WTC11 (cell line): ENCODE measurements at regions of chr9 and their contacts with region 1.

Region 1: DNA sequence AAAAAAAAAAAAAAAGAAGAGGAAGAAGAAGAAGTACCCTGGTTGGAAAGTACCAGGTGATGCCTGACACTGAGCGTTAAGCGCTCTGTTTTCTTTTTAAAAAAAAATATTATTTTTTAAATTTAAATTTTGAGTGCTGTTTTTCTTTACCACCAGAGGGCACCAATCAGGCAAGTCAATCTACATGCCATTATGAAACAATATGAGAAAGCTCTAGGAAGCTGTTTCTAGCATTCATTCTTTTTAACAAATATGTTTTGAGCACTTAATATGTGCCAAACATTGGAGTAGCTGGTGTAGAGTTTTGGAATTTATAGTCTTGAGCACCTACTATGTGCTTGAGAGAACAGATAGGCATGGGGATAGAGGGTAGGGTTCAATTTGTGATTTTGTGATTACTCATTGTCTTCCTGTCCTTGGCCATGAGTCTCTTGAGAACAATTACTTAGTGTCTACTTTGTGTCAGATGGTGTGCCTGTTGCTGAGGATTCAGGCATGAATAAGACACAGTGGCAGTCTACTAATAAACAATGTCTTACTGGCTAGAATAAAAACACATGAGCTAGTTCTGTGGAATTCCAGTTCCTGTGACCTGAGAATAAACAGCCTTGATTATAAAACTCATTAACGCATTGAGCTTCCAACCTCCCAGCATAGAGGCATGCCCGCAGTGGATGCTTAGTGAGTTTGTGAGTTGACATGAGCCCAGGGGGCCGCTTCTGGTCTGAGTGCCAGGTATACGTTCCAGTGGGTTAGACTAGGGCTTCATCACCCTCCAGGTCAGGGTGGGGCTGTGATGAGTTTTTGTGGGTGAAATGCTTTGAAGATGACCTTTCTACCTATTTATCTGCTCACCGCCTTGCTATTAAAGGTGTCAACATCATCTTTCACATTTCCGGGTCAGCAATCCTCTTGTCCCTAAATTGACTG is 3.0 kb upstream of the UBE2R2 start:
- DNase-seq: no peak
- ATAC-seq: no peak
- H3K4me3 Mint-ChIP-seq: no peak overlapping the region
- H3K27ac Mint-ChIP-seq: no peak overlapping the region
- H3K4me1 Mint-ChIP-seq: peaks cover 17% of the 10 kb centered on the region
- H3K27me3 Mint-ChIP-seq: no peaks in the 10 kb centered on the region
- CTCF ChIP-seq: peak; percentile 38

Region 2: DNA sequence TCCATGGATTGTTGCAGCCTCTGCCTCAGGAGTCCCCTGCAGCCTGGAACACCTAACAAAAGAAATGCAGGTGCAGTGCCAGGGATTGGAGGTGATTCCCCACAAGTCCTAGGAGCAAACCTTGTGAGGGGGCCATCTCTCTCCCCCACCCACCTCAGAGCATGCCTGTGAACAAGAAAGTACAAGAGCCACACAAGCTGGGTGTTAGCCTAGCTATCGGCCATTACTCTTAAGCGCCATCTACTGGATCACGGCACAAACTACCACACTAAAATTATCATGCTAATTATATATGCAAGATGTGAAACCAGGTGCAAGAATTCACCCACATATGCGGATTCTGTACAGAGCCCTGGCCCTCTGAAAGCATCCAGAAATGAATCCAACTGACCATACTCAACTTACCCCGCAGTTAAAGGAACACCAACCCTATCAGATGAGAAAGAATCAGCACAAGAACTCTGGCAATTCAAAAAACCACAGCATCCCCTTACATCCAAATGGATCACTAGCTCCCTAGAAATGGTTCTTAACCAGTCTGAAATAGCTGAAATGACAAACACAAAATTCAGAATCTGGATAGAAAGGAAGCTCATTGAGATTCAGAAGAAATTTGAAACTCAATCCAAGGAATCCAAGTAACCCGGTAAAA is 35.2 kb before region 1 on chr9:
- CTCF ChIA-PET with region 1: interaction called, 24 read pairs
- POLR2A ChIA-PET with region 1: no interaction called
- DNase-seq: peak; percentile 55
- ATAC-seq: peak; percentile 98
- H3K4me3 Mint-ChIP-seq: no peak overlapping the region
- H3K27ac Mint-ChIP-seq: no peak overlapping the region
- H3K4me1 Mint-ChIP-seq: no peaks in the 10 kb centered on the region
- H3K27me3 Mint-ChIP-seq: peaks cover 3% of the 10 kb centered on the region
- CTCF ChIP-seq: peak; percentile 44

Region 3: DNA sequence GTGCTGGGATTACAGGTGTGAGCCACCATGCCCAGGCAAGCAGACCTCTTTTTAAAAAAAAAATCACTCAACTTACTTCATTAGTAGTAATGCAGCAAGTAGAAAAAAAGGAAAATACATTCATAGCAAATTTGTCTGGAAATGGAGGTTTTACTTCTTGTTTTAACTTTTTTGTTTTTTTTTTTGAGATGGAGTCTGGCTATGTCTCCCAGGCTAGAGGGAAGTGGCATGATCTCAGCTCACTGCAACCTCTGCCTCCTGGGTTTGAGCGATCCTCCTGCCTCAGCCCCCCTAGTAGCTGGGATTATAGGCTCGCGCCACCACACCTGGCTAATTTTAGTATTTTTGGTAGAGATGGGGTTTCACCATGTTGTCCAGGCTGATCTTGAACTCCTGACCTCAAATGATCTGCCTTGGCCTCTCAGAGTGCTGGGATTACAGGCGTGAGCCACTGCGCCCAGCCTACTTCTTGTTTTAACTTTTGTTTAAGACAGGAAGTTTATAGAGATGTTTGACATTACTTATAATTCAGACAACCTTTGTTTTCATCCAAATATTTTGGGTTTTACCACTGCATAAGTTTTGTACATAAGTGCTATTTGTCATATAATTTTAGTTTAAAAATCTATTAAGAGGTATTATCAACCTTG is 29.5 kb after region 1 on chr9:
- CTCF ChIA-PET with region 1: interaction called, 6 read pairs
- POLR2A ChIA-PET with region 1: interaction called, 10 read pairs
- DNase-seq: no peak
- ATAC-seq: no peak
- H3K4me3 Mint-ChIP-seq: no peak overlapping the region
- H3K27ac Mint-ChIP-seq: no peak overlapping the region
- H3K4me1 Mint-ChIP-seq: peaks cover 6% of the 10 kb centered on the region
- H3K27me3 Mint-ChIP-seq: no peaks in the 10 kb centered on the region
- CTCF ChIP-seq: no peak

Region 4: GRCh38 chr9:33852216-33852826 is 38.3 kb after region 1 on chr9:
- CTCF ChIA-PET with region 1: interaction called, 51 read pairs
- POLR2A ChIA-PET with region 1: no interaction called
- DNase-seq: peak; percentile 38
- ATAC-seq: peak; percentile 67
- H3K4me3 Mint-ChIP-seq: no peak overlapping the region
- H3K27ac Mint-ChIP-seq: no peak overlapping the region
- H3K4me1 Mint-ChIP-seq: peaks cover 29% of the 10 kb centered on the region
- H3K27me3 Mint-ChIP-seq: no peaks in the 10 kb centered on the region
- CTCF ChIP-seq: no peak

Region 5: DNA sequence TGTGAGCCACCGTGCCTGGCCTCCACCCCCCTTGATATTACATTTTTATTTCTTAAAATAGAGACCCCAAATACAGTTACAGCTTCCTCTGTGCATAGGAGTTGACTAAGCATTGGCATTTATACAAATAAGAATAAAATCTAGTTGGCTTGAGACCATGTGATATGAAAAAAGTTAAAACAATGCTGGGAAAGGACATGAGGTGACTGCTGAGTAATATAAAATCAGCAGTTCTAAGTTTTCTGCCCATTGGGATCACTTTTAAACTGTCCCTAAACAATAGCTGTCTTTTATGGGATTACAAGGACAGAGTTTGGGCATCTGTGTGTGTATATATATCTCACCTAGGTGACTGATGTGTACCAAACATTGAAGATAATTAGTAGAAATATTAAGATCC is 99.6 kb after region 1 on chr9:
- CTCF ChIA-PET with region 1: interaction called, 10 read pairs
- POLR2A ChIA-PET with region 1: no interaction called
- DNase-seq: no peak
- ATAC-seq: no peak
- H3K4me3 Mint-ChIP-seq: no peak overlapping the region
- H3K27ac Mint-ChIP-seq: no peak overlapping the region
- H3K4me1 Mint-ChIP-seq: peaks cover 20% of the 10 kb centered on the region
- H3K27me3 Mint-ChIP-seq: no peaks in the 10 kb centered on the region
- CTCF ChIP-seq: no peak

Region 6: DNA sequence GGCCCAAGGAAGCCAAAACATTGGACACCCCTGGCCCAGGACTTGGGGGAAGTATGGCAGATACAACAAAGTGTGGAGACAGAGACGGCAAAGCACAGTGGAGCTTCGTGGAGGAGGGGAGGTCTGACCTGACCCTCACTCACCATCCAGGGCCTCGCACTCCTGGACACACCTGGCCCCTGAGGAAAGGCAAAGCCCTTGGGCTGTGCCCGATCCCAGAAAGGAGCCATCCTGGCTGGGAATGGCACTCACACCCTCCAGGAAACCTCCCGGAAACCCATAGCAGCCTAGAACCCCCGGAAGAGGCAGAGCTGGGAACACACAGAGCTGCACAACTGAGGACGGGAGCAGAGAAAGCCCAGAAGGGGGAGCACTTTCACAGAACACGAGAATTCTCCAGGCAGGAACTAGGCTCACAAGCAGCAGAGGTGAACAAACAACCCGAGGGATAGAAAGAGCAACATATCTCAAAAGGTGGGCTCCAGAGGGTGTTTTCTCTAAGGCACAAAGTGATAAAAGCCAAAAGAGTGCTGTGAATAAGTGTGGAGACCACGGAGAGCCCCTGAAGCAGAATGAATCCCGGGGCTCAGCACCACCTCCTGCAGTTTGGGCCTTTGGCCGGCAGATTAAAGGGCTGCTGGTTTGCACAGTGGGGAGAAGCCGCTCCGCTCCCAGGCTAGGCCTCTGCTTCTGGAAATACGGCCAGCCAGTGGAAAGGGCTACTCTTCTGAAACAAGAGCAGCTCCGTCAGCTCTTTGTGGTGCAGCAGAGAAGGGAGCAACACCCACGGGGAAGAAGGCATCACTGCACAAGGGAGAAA is 111.2 kb after region 1 on chr9:
- CTCF ChIA-PET with region 1: interaction called, 14 read pairs
- POLR2A ChIA-PET with region 1: no interaction called
- DNase-seq: peak; percentile 69
- ATAC-seq: peak; percentile 61
- H3K4me3 Mint-ChIP-seq: no peak overlapping the region
- H3K27ac Mint-ChIP-seq: peak overlapping the region; percentile 90
- H3K4me1 Mint-ChIP-seq: peaks cover 8% of the 10 kb centered on the region
- H3K27me3 Mint-ChIP-seq: no peaks in the 10 kb centered on the region
- CTCF ChIP-seq: peak; percentile 36; the same call in 1 of the 2 replicates

Region 7: DNA sequence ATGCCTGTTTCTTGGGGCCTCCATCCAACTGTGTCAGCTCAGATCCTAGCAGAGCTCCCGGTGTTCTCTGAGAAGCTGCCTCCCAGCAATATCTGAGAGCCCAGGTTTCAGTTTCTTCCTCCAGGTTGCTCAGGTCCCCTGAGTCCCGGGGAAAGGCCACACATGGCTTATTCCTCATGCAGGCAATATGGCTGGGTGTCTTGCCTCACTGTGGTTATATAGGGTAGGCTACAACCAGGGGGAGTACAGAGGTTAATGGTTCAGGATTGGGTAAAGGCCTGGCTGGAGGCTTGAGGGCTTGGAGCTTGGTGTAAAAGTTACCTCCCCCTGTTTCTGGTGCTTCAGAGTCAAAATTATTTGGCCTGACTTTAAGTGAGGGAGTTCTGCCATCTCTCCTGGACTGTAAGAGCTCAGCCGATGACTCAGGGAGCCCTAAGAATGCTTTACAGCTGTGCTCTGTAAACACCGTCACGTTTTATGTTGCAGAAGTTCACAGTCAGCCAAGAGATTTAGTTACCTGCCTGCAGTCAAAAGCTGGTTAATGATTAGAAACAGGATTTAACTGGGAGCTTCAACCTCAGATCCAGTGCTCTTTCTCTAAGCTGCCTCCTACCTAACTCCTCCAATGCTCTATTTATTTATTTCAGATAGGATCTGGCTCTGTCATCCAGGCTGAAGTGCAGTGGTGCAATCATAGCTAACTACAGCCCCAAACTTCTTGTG is 259.1 kb after region 1 on chr9:
- CTCF ChIA-PET with region 1: interaction called, 12 read pairs
- POLR2A ChIA-PET with region 1: no interaction called
- DNase-seq: no peak
- ATAC-seq: peak; percentile 16
- H3K4me3 Mint-ChIP-seq: no peak overlapping the region
- H3K27ac Mint-ChIP-seq: peak overlapping the region; percentile 80
- H3K4me1 Mint-ChIP-seq: peaks cover 25% of the 10 kb centered on the region
- H3K27me3 Mint-ChIP-seq: no peaks in the 10 kb centered on the region
- CTCF ChIP-seq: no peak